ENCODE measurements at regions of chr10 and their contacts with region 1.

Region 1: GRCh38 chr10:121608469-121609190 is 10.4 kb upstream of the FGFR2 start:
- ATAC-seq: peak; percentile 46 to 96 (median 70)
- H3K4me3 ChIP-seq: peak overlapping the region in 3 of 5 donors; percentile 9 to 30 (median 22)
- H3K27ac ChIP-seq: no peak overlapping the region
- H3K4me1 ChIP-seq: peaks cover 23 to 29% of the 10 kb centered on the region in 2 donors

Region 2: GRCh38 chr10:120969219-120969645 is 639.4 kb before region 1 on chr10:
- in situ Hi-C with region 1: loop called in 2 of 9 experiments (anchors 25 kb)
- ATAC-seq: no peak
- H3K4me3 ChIP-seq: no peak overlapping the region
- H3K27ac ChIP-seq: no peak overlapping the region
- H3K4me1 ChIP-seq: peaks cover 4 to 12% of the 10 kb centered on the region in 2 donors

Region 3: GRCh38 chr10:121734589-121735045 is 126.0 kb after region 1 on chr10:
- in situ Hi-C with region 1: loop called in 1 of 9 experiments (anchors 25 kb)
- ATAC-seq: peak in 2 of 8 experiments; percentile 24 to 27
- H3K4me3 ChIP-seq: no peak overlapping the region
- H3K27ac ChIP-seq: no peak overlapping the region
- H3K4me1 ChIP-seq: peaks cover 19 to 20% of the 10 kb centered on the region in 2 donors

Region 4: GRCh38 chr10:121886997-121887622 is 278.5 kb after region 1 on chr10:
- in situ Hi-C with region 1: loop called in 1 of 9 experiments (anchors 25 kb)
- ATAC-seq: peak; percentile 54 to 93 (median 82)
- H3K4me3 ChIP-seq: no peak overlapping the region
- H3K27ac ChIP-seq: no peak overlapping the region
- H3K4me1 ChIP-seq: no peaks in the 10 kb centered on the region

Region 5: DNA sequence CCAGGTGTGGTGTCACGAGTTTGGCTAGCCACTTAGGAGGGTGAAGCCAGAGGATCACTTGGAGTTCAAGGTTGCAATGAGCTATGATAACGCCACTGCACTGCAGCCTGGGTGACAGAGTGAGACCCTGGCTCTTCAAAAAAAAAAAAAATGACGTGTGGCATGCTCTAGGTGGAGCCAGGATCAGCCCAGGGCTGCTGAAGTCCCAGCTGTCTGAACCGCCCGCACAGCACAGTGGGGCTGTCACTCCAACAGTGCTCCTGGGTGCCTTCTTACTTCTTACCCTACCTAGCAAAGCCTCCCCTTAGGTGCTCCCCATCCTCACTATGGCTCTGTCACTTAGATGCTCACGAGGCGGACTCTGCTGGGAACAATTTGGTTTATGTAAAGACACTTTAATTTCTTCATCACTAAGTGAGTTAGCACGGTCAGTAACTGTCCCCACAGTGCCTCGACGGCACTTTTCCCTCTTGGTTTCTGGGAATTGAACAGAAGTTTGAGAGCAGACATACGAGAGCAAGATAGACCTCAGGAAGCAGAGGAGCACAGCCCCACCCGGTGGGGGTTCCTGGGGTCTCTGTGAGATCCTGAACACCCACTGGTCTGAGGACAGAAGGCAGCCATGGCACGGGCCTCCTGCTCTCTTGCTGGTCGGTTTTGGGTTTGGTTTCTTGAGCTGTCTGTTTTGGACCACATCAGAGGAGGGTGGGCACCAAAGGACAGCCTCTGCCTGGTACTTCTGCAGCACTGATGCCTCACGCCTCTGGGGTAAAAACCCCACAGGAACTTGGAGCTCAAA is 596.3 kb after region 1 on chr10:
- in situ Hi-C with region 1: no loop called
- ATAC-seq: peak in 1 of 8 experiments; percentile 16
- H3K4me3 ChIP-seq: no peak overlapping the region
- H3K27ac ChIP-seq: no peak overlapping the region
- H3K4me1 ChIP-seq: peaks cover 0 to 5% of the 10 kb centered on the region in 2 donors

Measured in motor neuron (in vitro differentiated cells).